Activated CD8-positive, alpha-beta T cell treated with anti-CD3 and anti-CD28 coated beads for 36 hours (primary cell): ENCODE measurements at regions of chr3 and their contacts with region 1.

Region 1: GRCh38 chr3:9396700-9397521 is 504 bp upstream of the SETD5 start:
- DNase-seq: peak; percentile 99
- ATAC-seq: peak; percentile 75
- H3K4me3 Mint-ChIP-seq: peak overlapping the region; percentile 92
- H3K27ac Mint-ChIP-seq: peak overlapping the region; percentile 99
- H3K4me1 Mint-ChIP-seq: peaks cover 61% of the 10 kb centered on the region
- H3K27me3 Mint-ChIP-seq: no peaks in the 10 kb centered on the region
- CTCF ChIP-seq: no peak

Region 2: DNA sequence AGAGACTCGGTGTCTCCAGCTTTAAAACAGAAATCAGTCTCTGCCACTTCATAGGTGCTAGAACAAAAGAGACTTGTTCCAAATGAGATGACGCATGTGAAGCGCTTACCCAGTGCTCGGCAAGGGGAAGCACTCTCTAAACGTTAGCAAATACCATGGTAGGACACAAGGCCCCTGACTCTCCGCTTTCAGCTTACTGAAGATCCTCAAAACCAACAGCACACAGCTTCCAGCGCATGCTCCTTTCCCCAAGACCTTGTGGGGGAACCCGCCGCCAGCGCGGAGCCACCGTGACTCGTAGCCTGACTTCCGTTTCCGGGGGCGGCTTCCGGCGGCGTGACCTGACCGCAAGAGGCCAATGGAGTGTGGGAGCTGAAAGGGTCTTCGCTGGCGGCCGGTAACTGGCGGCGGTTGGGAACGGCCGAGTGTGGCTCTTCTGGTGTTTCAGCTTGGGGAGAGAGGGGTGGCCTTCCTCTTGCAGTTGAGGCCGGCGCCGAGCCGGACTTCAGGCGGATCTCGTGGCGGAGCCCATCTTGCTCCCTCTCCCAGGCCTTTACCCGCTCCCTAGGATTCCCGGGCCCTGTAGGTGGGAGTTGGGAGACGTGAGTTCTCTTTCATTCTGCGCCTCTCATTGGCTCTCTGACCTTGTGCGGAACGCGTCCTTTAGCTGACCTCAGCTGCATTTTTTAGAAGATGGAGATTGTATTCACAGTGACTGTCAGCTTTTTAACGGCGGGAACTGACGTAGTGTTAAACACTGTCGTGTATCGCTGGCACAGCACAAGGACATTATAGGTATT is 34.0 kb before region 1 on chr3 and contains the start of gene THUMPD3:
- CTCF ChIA-PET with region 1: interaction called, 6 read pairs
- POLR2A ChIA-PET with region 1: interaction called, 83 read pairs
- intact Hi-C with region 1: no loop called
- DNase-seq: peak; percentile 95
- ATAC-seq: peak; percentile 94
- H3K4me3 Mint-ChIP-seq: peak within 1 kb of the TSS; percentile 93
- H3K27ac Mint-ChIP-seq: peak within 1 kb of the TSS; percentile 99
- H3K4me1 Mint-ChIP-seq: peaks cover 30% of the 10 kb centered on the region
- H3K27me3 Mint-ChIP-seq: no peaks in the 10 kb centered on the region
- CTCF ChIP-seq: no peak
- total RNA-seq, gene THUMPD3: 62.9 to 66.3 TPM

Region 3: GRCh38 chr3:9373465-9373864 is 23.4 kb before region 1 on chr3:
- CTCF ChIA-PET with region 1: interaction called, 3 read pairs
- POLR2A ChIA-PET with region 1: interaction called, 24 read pairs
- intact Hi-C with region 1: no loop called
- DNase-seq: no peak
- ATAC-seq: peak; percentile 24
- H3K4me3 Mint-ChIP-seq: no peak overlapping the region
- H3K27ac Mint-ChIP-seq: peak overlapping the region; percentile 62
- H3K4me1 Mint-ChIP-seq: peaks cover 40% of the 10 kb centered on the region
- H3K27me3 Mint-ChIP-seq: no peaks in the 10 kb centered on the region
- CTCF ChIP-seq: no peak

Region 4: GRCh38 chr3:9384141-9384853 is 12.6 kb before region 1 on chr3:
- CTCF ChIA-PET with region 1: interaction called, 7 read pairs
- POLR2A ChIA-PET with region 1: interaction called, 12 read pairs
- intact Hi-C with region 1: no loop called
- DNase-seq: no peak
- ATAC-seq: no peak
- H3K4me3 Mint-ChIP-seq: no peak overlapping the region
- H3K27ac Mint-ChIP-seq: peak overlapping the region; percentile 30
- H3K4me1 Mint-ChIP-seq: peaks cover 29% of the 10 kb centered on the region
- H3K27me3 Mint-ChIP-seq: no peaks in the 10 kb centered on the region
- CTCF ChIP-seq: no peak

Region 5: GRCh38 chr3:9416139-9416780 is 19.3 kb after region 1 on chr3:
- CTCF ChIA-PET with region 1: interaction called, 8 read pairs
- POLR2A ChIA-PET with region 1: interaction called, 20 read pairs
- intact Hi-C with region 1: no loop called
- DNase-seq: no peak
- ATAC-seq: no peak
- H3K4me3 Mint-ChIP-seq: no peak overlapping the region
- H3K27ac Mint-ChIP-seq: peak overlapping the region; percentile 19
- H3K4me1 Mint-ChIP-seq: peaks cover 58% of the 10 kb centered on the region
- H3K27me3 Mint-ChIP-seq: no peaks in the 10 kb centered on the region
- CTCF ChIP-seq: no peak

Region 6: DNA sequence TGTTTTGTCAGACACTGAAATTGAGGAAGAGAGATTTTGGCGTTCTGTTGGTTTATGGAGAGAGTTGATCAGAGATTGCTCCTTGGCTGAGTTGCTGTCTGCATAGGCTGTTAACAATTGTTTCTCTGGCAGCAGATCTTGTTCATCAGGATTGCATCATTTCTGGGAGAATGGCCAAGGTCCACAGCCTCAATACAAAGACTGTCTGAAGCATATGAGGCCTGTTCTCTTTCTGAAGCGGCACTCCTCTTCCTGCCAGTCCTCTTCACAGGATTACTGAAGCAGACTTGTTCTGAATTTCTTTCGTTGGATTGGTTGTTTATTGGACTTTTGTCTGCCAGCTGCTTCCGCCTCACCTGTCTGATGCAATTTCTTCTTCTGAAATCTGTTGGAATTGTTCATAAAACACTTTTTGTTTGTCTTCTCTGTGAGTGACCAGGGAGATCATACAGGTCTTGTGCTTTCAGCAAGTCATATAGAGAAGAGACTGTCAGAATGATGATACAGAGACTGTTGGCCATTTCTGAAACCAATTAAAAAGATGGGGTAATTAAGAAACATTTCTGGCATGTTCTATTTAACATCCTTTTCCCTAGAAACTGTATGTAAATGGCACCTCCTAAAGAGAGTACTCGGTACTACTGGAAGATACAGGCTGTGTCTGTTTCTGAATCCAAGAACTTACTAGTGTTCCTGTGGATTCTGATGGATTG is 26.0 kb after region 1 on chr3:
- CTCF ChIA-PET with region 1: interaction called, 8 read pairs
- POLR2A ChIA-PET with region 1: interaction called, 15 read pairs
- intact Hi-C with region 1: no loop called
- DNase-seq: peak; percentile 27
- ATAC-seq: peak; percentile 78
- H3K4me3 Mint-ChIP-seq: no peak overlapping the region
- H3K27ac Mint-ChIP-seq: peak overlapping the region; percentile 88
- H3K4me1 Mint-ChIP-seq: peaks cover 45% of the 10 kb centered on the region
- H3K27me3 Mint-ChIP-seq: no peaks in the 10 kb centered on the region
- CTCF ChIP-seq: peak; percentile 51